Thyroid gland (tissue), 4 donors: ENCODE measurements at regions of chr11 and their contacts with region 1.

Region 1: DNA sequence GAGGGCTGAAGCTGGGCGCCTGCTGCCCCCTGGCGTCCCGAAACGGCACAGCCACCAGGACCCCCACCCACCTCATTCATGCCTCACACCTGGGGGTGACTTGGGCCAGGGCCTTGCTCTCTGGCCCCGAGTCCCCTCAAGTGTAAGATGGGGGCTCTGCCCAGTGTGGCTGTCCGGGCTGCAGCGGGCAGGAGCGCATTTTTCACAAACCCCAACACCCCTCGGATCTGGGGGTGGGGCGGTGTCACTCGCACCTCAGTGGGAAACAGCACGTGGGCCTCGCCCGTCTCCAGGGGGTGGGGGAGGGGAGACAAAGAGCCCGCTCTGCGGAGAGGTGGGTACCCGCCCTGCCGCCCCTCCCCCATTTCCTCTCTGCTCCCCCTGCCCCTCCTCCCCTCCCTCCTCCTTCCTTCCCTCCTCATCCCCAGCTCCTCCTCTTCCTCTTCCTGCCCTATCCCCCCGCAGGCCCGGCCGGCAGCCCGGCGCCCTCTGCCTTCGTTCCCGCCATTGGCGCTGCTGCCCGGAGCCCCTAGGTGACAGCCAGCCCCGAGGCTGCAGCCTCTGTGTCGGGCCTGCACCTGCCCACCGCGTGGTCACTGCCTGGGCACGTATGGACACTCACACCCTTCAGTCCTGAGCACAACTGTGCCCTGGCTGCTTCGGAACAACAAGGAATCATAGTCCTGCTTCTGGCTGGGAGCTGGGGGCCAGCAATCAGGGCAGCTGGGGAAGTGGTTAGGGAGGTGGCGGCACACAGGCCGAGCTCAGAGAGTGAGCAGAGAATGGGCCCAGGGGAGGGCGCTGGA is 6.8 kb upstream of the CDKN1C start:
- DNase-seq: peak; percentile 55 to 64
- H3K4me3 ChIP-seq: peak overlapping the region in 1 of 3 donors; percentile 40
- H3K27ac ChIP-seq: peak overlapping the region in 2 of 3 donors; percentile 71 to 76
- H3K4me1 ChIP-seq: peaks cover 15 to 24% of the 10 kb centered on the region in 2 donors
- H3K27me3 ChIP-seq: no peaks in the 10 kb centered on the region
- CTCF ChIP-seq: peak; percentile 84 to 95 (median 90)
- POLR2A ChIP-seq: peak in 1 of 2 donors; percentile 13

Region 2: GRCh38 chr11:2305140-2305840 is 587.1 kb before region 1 on chr11:
- intact Hi-C with region 1: loop called (anchors 10 kb)
- DNase-seq: peak; percentile 84 to 87
- H3K4me3 ChIP-seq: no peak overlapping the region
- H3K27ac ChIP-seq: peak overlapping the region in 2 of 3 donors; percentile 22 to 85
- H3K4me1 ChIP-seq: peaks cover 10 to 37% of the 10 kb centered on the region in 2 donors
- H3K27me3 ChIP-seq: no peaks in the 10 kb centered on the region
- CTCF ChIP-seq: peak; percentile 81 to 96 (median 90)
- POLR2A ChIP-seq: no peak

Region 3: DNA sequence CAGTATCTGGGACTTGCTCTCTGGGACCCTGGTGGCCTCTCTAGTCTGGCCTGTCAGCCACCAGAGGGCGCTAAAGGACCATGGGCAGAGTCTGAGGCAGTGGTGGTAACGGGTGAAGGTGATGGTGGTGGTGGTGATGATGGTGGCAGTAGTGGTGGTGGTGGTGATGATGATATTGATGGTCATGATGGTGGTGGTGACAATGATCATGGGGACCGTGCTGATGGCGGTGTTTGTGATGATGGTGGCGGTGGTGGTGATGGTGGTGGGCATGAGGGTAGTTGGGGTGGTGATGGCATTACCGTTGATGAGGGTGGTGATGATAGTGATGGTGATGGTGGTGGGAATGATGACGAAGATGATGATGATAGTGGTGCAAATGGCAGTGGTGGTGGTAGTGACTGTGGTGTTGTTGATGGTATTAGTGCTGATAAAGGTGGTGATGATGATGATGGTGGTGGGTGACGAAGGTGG is 464.1 kb before region 1 on chr11:
- intact Hi-C with region 1: loop called (anchors 5 kb)
- DNase-seq: peak; percentile 82 to 87
- H3K4me3 ChIP-seq: no peak overlapping the region
- H3K27ac ChIP-seq: no peak overlapping the region
- H3K4me1 ChIP-seq: peaks cover 0 to 9% of the 10 kb centered on the region in 2 donors
- H3K27me3 ChIP-seq: no peaks in the 10 kb centered on the region
- CTCF ChIP-seq: peak; percentile 80 to 99 (median 94)
- POLR2A ChIP-seq: no peak

Region 4: GRCh38 chr11:2532704-2533586 is 359.5 kb before region 1 on chr11:
- intact Hi-C with region 1: loop called (anchors 2 kb)
- DNase-seq: peak; percentile 89
- H3K4me3 ChIP-seq: no peak overlapping the region
- H3K27ac ChIP-seq: no peak overlapping the region
- H3K4me1 ChIP-seq: peaks cover 5 to 17% of the 10 kb centered on the region in 2 donors
- H3K27me3 ChIP-seq: no peaks in the 10 kb centered on the region
- CTCF ChIP-seq: peak; percentile 91 to 99 (median 98)
- POLR2A ChIP-seq: no peak